Activated CD4-positive, alpha-beta memory T cell treated with anti-CD3 and anti-CD28 coated beads for 36 hours (primary cell): ENCODE measurements at regions of chr12 and their contacts with region 1.

Region 1: DNA sequence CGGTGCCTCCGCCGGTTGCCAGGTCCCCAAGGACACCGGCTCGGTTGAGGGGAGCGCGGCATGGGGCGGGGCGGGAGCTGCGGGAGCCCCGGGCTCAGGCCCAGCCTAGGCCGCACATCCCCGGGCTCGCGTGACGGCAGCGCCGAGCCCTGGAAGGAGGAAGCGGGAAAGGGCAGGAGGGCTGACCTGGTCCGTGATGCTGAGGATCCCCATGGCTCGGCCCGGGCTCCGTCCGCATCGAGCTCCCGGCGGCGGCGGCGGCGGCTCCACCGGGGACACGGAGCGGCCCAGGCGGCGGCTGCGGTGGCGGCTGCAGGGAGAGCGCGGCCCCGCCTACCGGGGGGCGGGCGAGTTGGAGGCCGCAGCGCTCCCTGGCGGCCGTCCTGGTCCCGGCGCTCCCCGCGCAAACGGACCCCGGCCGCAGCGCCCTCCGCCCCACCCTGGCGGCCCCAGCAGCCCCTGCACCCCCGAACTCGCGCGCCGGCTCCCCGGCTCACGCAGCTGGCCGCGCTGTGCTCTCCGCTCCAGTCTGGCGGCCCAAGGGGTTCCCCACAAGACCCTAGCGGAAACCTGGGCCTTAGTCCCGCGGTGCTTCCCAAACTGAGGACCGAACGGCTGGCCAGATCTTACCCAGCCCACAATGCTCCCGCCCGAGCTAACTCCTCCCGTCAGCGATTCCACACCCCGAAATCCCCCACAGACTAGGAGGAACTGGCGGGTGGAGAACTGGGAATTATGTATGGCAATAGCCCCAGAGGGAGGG is at the start of gene ANKRD52:
- DNase-seq: peak; percentile 82
- H3K4me3 Mint-ChIP-seq: peak within 1 kb of the TSS; percentile 87
- H3K27ac Mint-ChIP-seq: peak within 1 kb of the TSS; percentile 81
- H3K4me1 Mint-ChIP-seq: peaks cover 19% of the 10 kb centered on the region
- H3K27me3 Mint-ChIP-seq: no peaks in the 10 kb centered on the region
- total RNA-seq, gene ANKRD52: 34.1 to 37.0 TPM

Region 2: GRCh38 chr12:56178347-56178746 is 79.9 kb before region 1 on chr12:
- CTCF ChIA-PET with region 1: no interaction called
- POLR2A ChIA-PET with region 1: no interaction called
- intact Hi-C with region 1: no loop called
- DNase-seq: no peak
- H3K4me3 Mint-ChIP-seq: no peak overlapping the region
- H3K27ac Mint-ChIP-seq: no peak overlapping the region
- H3K4me1 Mint-ChIP-seq: no peaks in the 10 kb centered on the region
- H3K27me3 Mint-ChIP-seq: no peaks in the 10 kb centered on the region

Region 3: DNA sequence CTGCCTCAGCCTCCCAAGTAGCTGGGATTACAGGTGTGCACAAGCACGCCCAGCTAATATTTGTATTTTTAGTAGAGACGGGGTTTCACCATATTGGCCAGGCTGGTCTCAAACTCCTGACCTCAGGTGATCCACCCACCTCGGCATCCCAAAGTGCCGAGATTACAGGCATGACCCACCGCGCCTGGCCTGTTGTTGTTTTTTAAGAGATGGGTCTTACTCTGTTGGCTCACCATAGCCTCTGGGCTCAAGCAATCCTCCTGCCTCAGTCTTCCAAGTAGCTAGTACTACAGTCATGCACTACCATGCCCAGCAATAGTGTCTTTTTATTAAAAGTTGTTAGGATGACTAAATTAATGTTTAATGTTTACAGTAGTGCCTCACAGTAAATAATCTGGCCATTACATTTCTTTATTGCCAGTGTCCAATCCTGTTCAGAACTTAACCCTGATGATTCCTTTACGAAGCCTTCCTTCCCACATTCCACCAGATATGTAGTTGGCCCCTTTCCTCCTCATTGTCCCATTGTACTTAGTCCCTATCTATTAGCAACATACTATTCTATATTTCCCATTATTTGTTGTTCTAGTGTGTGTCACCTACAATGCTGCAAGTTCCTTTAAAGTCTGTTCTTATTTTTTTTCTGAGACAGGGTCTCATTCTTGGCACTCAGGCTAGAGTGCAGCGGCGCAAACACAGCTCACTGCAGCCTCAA is 60.2 kb before region 1 on chr12:
- CTCF ChIA-PET with region 1: interaction called, 12 read pairs
- POLR2A ChIA-PET with region 1: no interaction called
- intact Hi-C with region 1: loop called (anchors 1 kb)
- DNase-seq: no peak
- H3K4me3 Mint-ChIP-seq: no peak overlapping the region
- H3K27ac Mint-ChIP-seq: no peak overlapping the region
- H3K4me1 Mint-ChIP-seq: peaks cover 5% of the 10 kb centered on the region
- H3K27me3 Mint-ChIP-seq: no peaks in the 10 kb centered on the region

Region 4: GRCh38 chr12:56278905-56279304 is 20.7 kb after region 1 on chr12:
- CTCF ChIA-PET with region 1: no interaction called
- POLR2A ChIA-PET with region 1: no interaction called
- intact Hi-C with region 1: no loop called
- DNase-seq: no peak
- H3K4me3 Mint-ChIP-seq: no peak overlapping the region
- H3K27ac Mint-ChIP-seq: no peak overlapping the region
- H3K4me1 Mint-ChIP-seq: no peaks in the 10 kb centered on the region
- H3K27me3 Mint-ChIP-seq: no peaks in the 10 kb centered on the region